CD14-positive monocyte (primary cell): ENCODE measurements at regions of chr16 and their contacts with region 1.

Region 1: GRCh38 chr16:30761928-30762810 is at the starts of genes CFAP119 and RNF40:
- DNase-seq: peak; percentile 96 to 97 (median 96)
- H3K4me3 ChIP-seq: peak within 1 kb of the TSS; percentile 73 to 96 (median 94)
- H3K4me3 Mint-ChIP-seq: peak within 1 kb of the TSS; percentile 87 to 93
- H3K27ac ChIP-seq: peak within 1 kb of the TSS; percentile 56 to 98
- H3K27ac Mint-ChIP-seq: peak within 1 kb of the TSS; percentile 91 to 98 (median 95)
- H3K4me1 ChIP-seq: peaks cover 48 to 60% of the 10 kb centered on the region in 2 donors
- H3K4me1 Mint-ChIP-seq: peaks cover 49% of the 10 kb centered on the region
- H3K27me3 ChIP-seq: no peaks in the 10 kb centered on the region
- H3K27me3 Mint-ChIP-seq: peaks cover 0 to 6% (median 0%) of the 10 kb centered on the region in 3 donors
- CTCF ChIP-seq: no peak
- polyA plus RNA-seq, gene CFAP119: 2.4 to 25.3 (median 3.5) TPM
- polyA plus RNA-seq, gene RNF40: 14.8 to 53.5 (median 34.9) TPM

Region 2: GRCh38 chr16:29995911-29996772 is 766.0 kb before region 1 on chr16 and contains the start of gene INO80E:
- intact Hi-C with region 1: loop called in 1 of 2 experiments (anchors 5 kb)
- DNase-seq: peak; percentile 94 to 96 (median 96)
- H3K4me3 ChIP-seq: peak within 1 kb of the TSS; percentile 79 to 100 (median 100)
- H3K4me3 Mint-ChIP-seq: peak within 1 kb of the TSS; percentile 91 to 98
- H3K27ac ChIP-seq: peak within 1 kb of the TSS; percentile 86 to 94
- H3K27ac Mint-ChIP-seq: peak within 1 kb of the TSS; percentile 92 to 98 (median 97)
- H3K4me1 ChIP-seq: peaks cover 18 to 31% of the 10 kb centered on the region in 2 donors
- H3K4me1 Mint-ChIP-seq: peaks cover 23% of the 10 kb centered on the region
- H3K27me3 ChIP-seq: no peaks in the 10 kb centered on the region
- H3K27me3 Mint-ChIP-seq: peaks cover 0 to 5% (median 0%) of the 10 kb centered on the region in 3 donors
- CTCF ChIP-seq: no peak
- polyA plus RNA-seq, gene INO80E: 2.8 to 57.6 (median 3.5) TPM

Region 3: DNA sequence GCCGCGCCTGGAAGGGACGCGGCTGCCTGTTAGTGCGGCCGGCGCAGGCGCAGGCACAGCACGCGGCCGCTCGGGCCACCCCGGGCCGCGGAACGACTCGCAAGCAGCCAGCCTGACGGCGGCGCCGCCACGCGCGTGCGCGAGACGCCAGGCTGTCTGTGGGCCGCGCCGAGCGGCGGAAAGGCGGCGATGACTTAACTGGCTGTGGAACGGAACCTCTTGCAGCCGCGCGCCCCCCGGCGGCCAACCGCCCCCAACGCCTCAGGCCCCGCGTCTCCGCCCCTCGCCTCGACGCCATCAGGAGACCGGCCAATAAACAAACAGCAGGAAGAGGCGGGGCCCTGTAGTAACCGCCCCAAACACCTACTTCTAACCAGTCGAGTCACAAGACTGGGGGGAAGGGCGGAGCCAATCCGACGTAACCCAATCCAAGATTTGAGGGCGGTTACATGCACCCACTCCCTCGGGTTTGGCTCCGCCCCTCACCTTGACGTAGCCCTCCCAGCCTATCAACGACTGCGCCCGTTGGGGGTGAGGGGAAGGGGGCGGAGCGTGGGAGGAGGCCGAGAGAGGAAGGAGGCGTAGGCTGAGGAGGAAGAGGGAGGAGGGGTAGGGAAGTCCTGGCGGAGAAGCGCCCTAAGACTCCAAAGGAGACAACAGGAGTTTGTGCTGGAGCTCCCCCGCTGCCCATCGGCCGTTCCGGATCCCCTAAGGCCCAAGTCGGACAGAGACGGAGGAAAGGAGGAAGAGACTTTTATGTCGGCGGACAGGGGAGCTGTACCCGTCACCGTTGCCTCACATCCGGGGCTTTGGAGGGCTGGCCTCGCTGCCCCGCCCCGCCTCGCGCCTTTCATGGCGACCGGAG is 104.1 kb before region 1 on chr16 and contains the start of gene FBRS:
- intact Hi-C with region 1: loop called in 1 of 2 experiments (anchors 5 kb)
- DNase-seq: peak; percentile 100
- H3K4me3 ChIP-seq: peak within 1 kb of the TSS; percentile 81 to 99 (median 86)
- H3K4me3 Mint-ChIP-seq: peak within 1 kb of the TSS; percentile 90 to 99
- H3K27ac ChIP-seq: peak within 1 kb of the TSS; percentile 93 to 99
- H3K27ac Mint-ChIP-seq: peak within 1 kb of the TSS; percentile 100
- H3K4me1 ChIP-seq: peaks cover 33 to 45% of the 10 kb centered on the region in 2 donors
- H3K4me1 Mint-ChIP-seq: peaks cover 38% of the 10 kb centered on the region
- H3K27me3 ChIP-seq: no peaks in the 10 kb centered on the region
- H3K27me3 Mint-ChIP-seq: peaks cover 0 to 1% (median 0%) of the 10 kb centered on the region in 3 donors
- CTCF ChIP-seq: peak; percentile 68
- polyA plus RNA-seq, gene FBRS: 1.4 to 44.8 (median 2.1) TPM

Region 4: DNA sequence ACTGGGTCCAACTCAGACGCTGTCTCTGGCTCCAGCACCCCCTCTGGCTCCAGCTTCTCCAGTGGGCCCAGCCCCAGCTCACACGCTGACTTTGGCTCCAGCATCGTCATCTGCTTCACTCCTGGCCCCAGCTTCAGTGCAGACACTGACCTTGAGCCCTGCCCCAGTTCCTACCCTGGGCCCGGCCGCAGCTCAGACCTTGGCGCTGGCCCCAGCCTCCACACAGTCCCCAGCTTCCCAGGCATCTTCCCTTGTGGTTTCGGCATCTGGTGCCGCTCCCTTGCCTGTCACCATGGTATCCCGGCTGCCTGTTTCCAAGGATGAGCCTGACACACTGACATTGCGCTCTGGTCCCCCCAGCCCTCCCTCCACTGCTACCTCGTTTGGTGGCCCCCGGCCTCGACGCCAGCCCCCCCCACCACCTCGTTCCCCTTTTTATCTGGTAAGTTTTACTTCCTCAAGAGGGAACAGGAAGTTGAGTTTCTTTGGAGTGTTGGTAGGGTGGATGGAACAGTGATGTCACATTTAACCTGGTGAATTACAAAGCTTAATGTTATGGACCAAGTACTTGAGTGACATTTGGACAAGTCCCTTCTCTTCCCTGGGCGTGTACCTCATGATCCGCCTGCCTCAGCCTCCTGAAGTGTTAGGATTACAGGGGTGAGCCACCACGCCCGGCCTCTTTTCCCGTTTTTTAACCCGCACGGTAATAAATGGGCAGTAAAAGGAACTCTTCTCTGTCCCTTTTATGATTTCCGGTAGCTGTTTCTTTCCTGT is 37.3 kb before region 1 on chr16:
- intact Hi-C with region 1: loop called in 1 of 2 experiments (anchors 5 kb)
- DNase-seq: peak; percentile 85 to 94 (median 88)
- H3K4me3 ChIP-seq: peak overlapping the region in 2 of 3 experiments; percentile 0 to 62
- H3K4me3 Mint-ChIP-seq: peak overlapping the region; percentile 63 to 81
- H3K27ac ChIP-seq: peak overlapping the region; percentile 88 to 93
- H3K27ac Mint-ChIP-seq: peak overlapping the region; percentile 94 to 97 (median 95)
- H3K4me1 ChIP-seq: peaks cover 52 to 54% of the 10 kb centered on the region in 2 donors
- H3K4me1 Mint-ChIP-seq: peaks cover 53% of the 10 kb centered on the region
- H3K27me3 ChIP-seq: no peaks in the 10 kb centered on the region
- H3K27me3 Mint-ChIP-seq: peaks cover 0 to 4% (median 3%) of the 10 kb centered on the region in 3 donors
- CTCF ChIP-seq: no peak

Region 5: DNA sequence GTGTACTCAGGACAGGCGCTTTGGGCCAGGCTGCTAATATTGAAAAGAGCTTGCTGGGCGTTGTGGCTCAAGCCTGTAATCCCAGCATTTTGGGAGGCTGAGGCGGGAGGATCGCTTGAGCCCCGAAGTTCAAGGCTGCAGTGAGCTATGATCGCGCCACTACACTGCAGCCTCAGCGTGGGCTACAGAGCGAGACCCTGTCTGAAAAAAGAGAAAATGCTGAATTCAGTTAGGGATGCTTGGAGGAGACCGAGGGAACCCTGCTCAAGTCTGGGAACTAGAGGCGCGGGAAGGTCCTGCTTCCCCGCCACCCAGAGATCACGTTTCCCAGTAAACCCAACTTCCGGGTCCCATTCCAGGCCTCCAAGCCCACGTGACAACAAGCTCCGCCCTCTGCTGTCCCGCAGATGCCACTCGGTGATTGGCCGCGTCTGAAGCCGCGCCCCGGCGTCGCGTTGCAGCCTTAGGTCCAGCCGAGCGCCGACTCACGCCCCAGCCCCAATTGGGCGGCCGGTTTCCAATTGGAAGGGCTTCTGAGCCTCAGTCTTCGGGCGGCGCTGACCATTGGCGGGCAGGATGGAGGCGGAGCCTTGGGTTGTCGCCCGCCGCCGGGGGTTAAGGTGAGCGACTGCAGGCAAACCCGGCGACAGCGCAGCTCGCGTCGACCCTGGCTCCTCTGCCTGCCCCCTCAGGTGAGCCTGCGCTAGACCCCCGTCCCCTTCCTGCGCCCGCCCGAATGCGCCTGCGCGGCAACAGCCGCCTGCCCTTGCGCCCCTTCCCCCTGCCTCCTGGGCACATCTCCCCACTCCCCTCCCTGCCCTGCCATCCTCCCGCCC is 14.2 kb before region 1 on chr16 and contains the start of gene PHKG2:
- intact Hi-C with region 1: loop called in 1 of 2 experiments (anchors 2 kb)
- DNase-seq: peak; percentile 97 to 99 (median 98)
- H3K4me3 ChIP-seq: peak within 1 kb of the TSS; percentile 48 to 79 (median 69)
- H3K4me3 Mint-ChIP-seq: peak within 1 kb of the TSS; percentile 92 to 93
- H3K27ac ChIP-seq: peak within 1 kb of the TSS; percentile 69 to 88
- H3K27ac Mint-ChIP-seq: peak within 1 kb of the TSS; percentile 80 to 95 (median 90)
- H3K4me1 ChIP-seq: peaks cover 23 to 24% of the 10 kb centered on the region in 2 donors
- H3K4me1 Mint-ChIP-seq: peaks cover 27% of the 10 kb centered on the region
- H3K27me3 ChIP-seq: no peaks in the 10 kb centered on the region
- H3K27me3 Mint-ChIP-seq: no peaks in the 10 kb centered on the region
- CTCF ChIP-seq: no peak
- polyA plus RNA-seq, gene PHKG2: 45.4 to 115 (median 54.2) TPM

Region 6: DNA sequence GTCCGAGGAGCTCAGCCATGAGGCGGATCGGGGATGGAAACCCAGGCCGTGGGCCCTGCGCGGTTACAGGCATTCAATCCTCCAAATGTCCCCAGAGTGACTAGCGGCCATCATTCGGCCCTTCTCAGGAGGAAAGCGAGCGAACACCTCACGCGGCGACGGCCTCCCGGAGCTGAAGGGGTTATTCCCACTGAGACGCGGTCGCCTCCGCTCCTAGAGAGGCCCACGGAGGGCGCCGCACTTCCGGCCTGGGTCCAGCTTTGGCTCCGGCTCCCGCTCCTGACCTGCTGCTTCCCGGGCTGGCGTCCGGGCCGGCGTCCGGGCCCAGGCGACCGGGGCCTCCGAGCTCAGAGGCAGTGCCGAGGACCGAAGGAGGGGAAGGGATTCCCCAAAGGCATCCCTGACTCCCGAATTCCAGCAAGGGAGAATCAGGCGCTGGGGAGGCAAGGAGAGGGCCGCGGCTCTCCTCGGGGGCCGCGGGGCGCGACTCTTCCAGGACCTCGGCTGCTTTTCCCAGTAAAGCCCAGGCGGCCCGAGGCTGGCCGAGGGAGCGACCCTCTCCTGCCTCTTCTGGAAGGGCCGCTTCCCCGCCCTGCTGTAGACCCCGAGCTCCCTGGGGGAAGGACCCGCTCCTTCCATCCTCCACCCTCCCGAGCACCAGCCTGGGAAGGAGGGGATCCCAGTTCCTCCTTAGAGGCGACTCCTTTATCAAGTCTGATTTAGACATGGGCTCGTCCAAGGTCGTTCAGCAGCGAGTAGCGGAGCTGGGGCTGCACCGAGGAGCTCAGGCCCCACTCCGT is 43.4 kb after region 1 on chr16:
- intact Hi-C with region 1: loop called in 1 of 2 experiments (anchors 5 kb)
- DNase-seq: peak; percentile 50 to 62 (median 56)
- H3K4me3 ChIP-seq: peak overlapping the region; percentile 59 to 97 (median 82)
- H3K4me3 Mint-ChIP-seq: peak overlapping the region; percentile 91
- H3K27ac ChIP-seq: peak overlapping the region; percentile 59 to 82
- H3K27ac Mint-ChIP-seq: peak overlapping the region; percentile 72 to 89 (median 79)
- H3K4me1 ChIP-seq: peaks cover 45 to 51% of the 10 kb centered on the region in 2 donors
- H3K4me1 Mint-ChIP-seq: peaks cover 41% of the 10 kb centered on the region
- H3K27me3 ChIP-seq: no peaks in the 10 kb centered on the region
- H3K27me3 Mint-ChIP-seq: peaks cover 0 to 4% (median 0%) of the 10 kb centered on the region in 3 donors
- CTCF ChIP-seq: no peak

Region 7: DNA sequence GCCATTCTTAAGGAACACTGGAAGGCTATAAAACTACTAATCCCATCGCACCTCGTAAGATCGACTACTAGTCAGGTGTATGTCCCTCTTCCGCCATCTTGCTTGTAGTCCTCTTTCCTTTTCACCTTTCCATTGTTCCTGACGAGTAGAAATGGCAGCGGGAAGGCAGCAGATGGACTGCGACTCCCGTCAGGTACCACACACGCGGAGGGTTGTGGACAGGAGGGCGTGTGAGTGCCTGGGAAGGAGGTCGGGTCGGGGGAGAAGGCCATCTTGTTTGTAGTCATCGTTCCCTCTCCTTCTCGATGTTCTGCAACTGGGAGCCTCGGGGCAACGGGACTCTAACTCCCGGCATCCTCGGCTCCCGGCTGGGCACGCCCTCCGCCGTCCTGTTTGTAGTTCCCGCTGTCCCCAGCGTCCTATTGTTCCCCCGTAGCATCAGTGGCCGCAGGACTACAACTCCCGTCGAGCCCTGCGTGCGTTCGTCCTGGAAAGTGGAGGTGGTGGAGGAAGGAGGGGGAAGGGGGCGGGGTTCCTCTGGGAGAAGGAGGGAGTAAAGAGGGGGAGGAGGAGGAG is 160.9 kb after region 1 on chr16:
- intact Hi-C with region 1: loop called in 1 of 2 experiments (anchors 10 kb)
- DNase-seq: peak; percentile 97 to 99 (median 98)
- H3K4me3 ChIP-seq: peak overlapping the region; percentile 60 to 85 (median 74)
- H3K4me3 Mint-ChIP-seq: peak overlapping the region; percentile 94 to 100
- H3K27ac ChIP-seq: peak overlapping the region; percentile 93 to 94
- H3K27ac Mint-ChIP-seq: peak overlapping the region; percentile 100
- H3K4me1 ChIP-seq: peaks cover 12 to 25% of the 10 kb centered on the region in 2 donors
- H3K4me1 Mint-ChIP-seq: peaks cover 29% of the 10 kb centered on the region
- H3K27me3 ChIP-seq: no peaks in the 10 kb centered on the region
- H3K27me3 Mint-ChIP-seq: no peaks in the 10 kb centered on the region
- CTCF ChIP-seq: no peak